ENCODE measurements at regions of chr18 and their contacts with region 1.

Region 1: GRCh38 chr18:61635901-61636528 is 256.8 kb downstream of the RNF152 start:
- DNase-seq: peak; percentile 82 to 89
- ATAC-seq: peak; percentile 90

Region 2: DNA sequence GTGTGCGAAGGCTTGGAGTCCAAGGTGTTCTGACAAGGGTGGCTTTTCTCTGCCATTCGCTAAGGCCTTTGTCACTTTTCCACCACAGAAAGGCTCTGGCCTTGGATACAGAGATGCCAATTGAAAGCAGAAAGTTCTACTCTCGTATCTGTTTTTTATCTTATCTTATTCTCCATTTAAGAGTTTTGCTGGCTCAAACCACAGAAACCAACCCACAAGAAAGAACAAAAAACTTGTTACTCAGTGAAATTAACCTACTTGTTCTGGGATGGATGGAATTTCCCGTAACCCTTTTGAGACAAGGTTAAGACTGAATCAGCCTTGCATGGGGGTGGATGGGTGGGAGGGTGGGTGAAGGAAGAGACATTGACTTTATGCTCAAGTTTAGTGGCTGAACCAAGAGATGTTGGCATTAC is 81.1 kb before region 1 on chr18:
- intact Hi-C with region 1: no loop called
- DNase-seq: no peak
- ATAC-seq: no peak

Region 3: GRCh38 chr18:61581578-61582201 is 54.3 kb before region 1 on chr18:
- intact Hi-C with region 1: no loop called
- DNase-seq: peak; percentile 64 to 84
- ATAC-seq: peak; percentile 93

Region 4: DNA sequence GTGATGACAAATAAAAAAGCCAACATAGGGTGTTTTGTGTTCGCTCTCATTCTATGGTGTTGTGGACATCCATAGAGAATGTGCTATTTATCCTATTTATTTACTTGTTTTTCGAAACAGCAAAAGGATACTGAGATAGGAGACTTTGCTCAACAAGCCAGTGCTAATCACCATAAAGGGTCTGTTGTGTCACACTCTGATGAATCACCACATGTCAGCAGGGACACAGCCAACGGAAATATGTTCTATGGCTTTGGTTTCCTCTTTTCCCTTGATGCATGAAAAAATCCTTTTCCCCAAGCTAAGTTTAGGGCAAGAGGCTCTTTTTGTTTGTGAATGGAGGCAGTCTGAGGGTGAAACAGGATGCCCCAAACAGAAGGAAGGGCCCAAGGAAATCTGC is 102.5 kb after region 1 on chr18:
- intact Hi-C with region 1: loop called in 1 of 2 experiments (anchors 5 kb)
- DNase-seq: no peak
- ATAC-seq: no peak

Region 5: DNA sequence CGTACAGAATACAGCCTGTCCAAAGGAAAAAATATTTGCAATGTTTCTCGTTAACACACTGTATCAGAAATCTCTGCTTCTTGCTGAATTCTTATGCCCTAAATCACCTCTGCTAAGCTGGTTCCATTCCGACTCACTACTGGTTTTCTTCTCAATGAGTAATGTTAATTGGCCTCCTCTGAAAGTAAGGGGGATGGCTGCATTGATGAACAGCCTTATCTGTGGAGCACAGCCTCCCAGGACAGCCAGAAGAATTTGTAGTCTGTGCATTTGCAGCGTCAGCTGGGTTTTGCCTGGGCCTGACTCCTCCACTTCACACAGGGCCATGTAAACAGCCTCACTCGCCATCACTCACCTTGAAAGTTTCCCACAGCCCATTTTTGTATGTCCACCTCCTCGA is 129.1 kb after region 1 on chr18:
- intact Hi-C with region 1: no loop called
- DNase-seq: no peak
- ATAC-seq: no peak

Region 6: DNA sequence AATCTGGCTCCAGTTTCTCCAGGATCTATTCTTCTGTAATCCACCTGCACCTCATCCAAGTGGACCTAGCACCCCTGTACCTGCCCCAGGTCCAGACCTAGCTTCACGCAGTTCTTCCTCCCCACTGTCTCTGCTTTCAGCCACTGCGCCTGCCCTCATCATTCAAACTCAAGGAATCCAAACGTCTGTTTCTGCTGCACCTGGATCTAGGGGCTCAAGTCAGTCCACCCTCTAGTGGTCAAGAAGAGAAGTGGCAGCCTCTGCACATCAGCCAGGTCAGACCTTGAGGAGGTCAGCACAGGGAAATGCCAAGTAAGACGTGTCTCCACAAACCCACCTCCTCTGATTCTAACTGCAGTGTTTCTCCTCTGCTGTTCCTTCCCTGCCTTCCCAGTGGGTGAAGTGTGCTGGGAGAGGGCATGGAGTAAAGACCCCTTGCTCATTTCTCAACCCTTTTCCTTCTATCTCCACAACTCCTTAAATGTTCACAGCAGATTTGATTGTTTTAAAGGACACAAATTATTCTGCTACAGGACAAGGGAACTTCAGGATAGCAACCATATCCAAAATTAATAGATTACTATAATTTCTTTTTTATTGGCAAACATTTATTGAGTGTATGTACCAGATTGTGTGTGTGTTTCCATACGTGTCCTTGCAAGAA is 265.4 kb after region 1 on chr18:
- intact Hi-C with region 1: loop called in 1 of 2 experiments (anchors 5 kb)
- DNase-seq: peak; percentile 29 to 35
- ATAC-seq: peak; percentile 71

Measured in left colon (tissue), 2 donors.